Esophagus squamous epithelium (tissue), 5 donors: ENCODE measurements at regions of chr16 and their contacts with region 1.

Region 1: DNA sequence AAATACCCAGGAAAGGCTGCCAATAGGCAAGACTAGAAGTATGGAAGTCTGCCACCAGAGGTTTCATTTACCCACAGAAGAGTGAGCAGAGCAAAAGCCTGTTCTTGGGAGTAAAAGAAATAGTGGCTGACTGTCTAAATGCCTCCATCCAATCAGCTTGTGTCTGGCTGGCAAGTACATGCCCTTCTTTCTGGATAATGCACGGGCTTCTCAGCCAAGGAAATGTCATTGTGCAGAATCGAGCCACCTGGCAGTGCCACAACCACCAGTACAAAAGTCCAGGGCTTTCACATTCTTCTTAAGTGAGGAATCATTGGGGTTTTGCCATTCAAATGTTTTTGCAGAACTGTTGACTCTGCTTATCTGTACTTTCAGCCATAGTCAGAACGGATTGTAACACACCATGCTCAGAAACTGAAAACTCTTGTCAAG is 10.1 kb upstream of the ERCC4 start:
- DNase-seq: no peak
- H3K4me3 ChIP-seq: no peak overlapping the region
- H3K27ac ChIP-seq: peak overlapping the region in 3 of 4 donors; percentile 47 to 78 (median 65)
- H3K4me1 ChIP-seq: peaks cover 5 to 43% (median 12%) of the 10 kb centered on the region in 3 donors
- H3K27me3 ChIP-seq: no peaks in the 10 kb centered on the region
- CTCF ChIP-seq: peak in 2 of 6 experiments; percentile 15 to 32
- POLR2A ChIP-seq: no peak

Region 2: DNA sequence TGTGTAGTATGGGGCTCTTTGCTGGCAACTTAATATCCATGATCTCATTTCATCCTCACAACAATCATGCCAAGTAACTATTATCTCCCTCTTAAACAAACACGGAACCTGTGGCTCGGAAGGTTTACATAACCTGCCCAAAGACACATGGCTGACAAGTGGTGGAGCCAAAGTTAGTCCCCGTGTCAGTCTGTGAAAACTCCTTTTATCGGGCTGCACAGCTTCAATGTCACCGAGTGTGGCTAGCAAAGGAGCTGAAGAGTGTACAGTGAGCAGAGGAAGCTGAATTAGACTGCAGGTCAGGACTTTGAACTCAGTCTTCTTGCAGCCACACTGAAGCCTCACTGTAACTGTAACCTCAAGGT is 639.9 kb after region 1 on chr16:
- intact Hi-C with region 1: loop called (anchors 5 kb)
- DNase-seq: no peak
- H3K4me3 ChIP-seq: no peak overlapping the region
- H3K27ac ChIP-seq: no peak overlapping the region
- H3K4me1 ChIP-seq: no peaks in the 10 kb centered on the region
- H3K27me3 ChIP-seq: no peaks in the 10 kb centered on the region
- CTCF ChIP-seq: no peak
- POLR2A ChIP-seq: no peak